Activated CD4-positive, alpha-beta T cell treated with anti-CD3 and anti-CD28 coated beads, Interleukin-2, amount 10 ng/mL, durations not matched to agents 24 days and 14 days (primary cell): ENCODE measurements at regions of chr13 and their contacts with region 1.

Region 1: DNA sequence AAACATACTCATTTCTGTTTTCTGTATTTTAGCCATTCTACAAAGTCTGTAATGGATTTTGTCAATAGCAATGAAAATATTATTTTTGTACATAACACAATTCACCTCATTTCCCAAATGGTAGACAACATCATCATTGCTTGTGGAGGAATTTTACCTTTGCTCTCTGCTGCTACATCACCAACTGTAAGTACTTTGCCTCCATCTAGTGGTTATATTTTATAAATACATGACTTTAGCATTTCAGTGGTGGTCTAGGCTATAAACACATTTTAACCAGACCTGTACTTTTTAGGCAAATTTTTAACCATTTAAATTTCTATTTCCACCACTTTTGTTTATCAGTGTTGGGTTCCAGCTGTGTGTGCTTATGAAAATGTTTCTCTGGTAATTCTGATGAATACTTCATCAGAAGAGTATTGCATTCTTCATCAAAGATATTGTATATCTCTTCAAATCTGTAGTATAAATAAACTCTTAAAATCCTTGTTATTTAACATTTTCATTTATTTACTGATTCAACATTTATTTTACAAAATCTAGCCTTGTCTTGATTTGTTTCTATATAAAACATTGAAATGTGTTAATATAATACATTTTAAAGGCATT is 222.4 kb downstream of the NBEA start:
- DNase-seq: no peak
- H3K4me3 Mint-ChIP-seq: no peak overlapping the region
- H3K27ac Mint-ChIP-seq: no peak overlapping the region
- H3K4me1 Mint-ChIP-seq: peaks cover 8% of the 10 kb centered on the region
- H3K27me3 Mint-ChIP-seq: no peaks in the 10 kb centered on the region

Region 2: DNA sequence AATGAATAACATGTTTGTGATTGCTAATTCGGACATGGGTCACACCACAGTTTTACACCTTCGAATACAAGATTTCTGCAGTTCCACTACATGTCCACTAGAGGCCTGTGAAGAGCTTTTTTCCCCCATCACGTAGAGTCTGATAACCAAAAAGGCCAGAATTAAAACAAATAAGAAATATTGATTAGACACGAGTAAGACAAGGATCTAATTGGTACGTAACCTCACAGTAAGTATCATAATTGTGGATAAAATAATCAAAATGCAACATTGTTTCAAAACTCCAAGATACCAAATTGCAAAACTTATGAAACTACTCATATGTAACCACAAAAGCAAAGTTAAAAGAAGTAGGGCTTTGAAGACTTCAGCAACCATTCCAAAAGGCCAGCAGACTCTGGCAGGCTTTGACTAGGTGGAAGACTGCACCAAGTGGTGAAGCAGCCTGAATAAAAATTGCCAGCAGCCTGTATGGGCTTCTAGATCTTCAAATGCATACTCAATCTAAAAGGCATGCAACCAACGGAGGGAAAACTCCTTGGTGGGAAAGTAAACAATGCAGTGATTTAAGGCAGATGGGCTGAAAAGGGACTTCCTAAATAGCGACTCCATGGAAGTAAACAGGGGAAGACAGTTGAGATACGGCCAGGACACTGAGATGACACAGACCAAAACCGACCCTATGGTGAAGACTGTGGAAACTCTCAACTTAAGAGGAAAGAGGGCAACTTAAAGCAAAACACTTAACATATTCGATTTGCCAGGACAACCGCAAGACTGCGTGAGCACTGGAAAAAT is 1935.6 kb before region 1 on chr13:
- intact Hi-C with region 1: loop called (anchors 5 kb)
- DNase-seq: peak; percentile 67
- H3K4me3 Mint-ChIP-seq: no peak overlapping the region
- H3K27ac Mint-ChIP-seq: peak overlapping the region; percentile 10
- H3K4me1 Mint-ChIP-seq: peaks cover 8% of the 10 kb centered on the region
- H3K27me3 Mint-ChIP-seq: peaks cover 3% of the 10 kb centered on the region

Region 3: GRCh38 chr13:33723772-33724435 is 1440.5 kb before region 1 on chr13:
- intact Hi-C with region 1: loop called (anchors 5 kb)
- DNase-seq: peak; percentile 90
- H3K4me3 Mint-ChIP-seq: no peak overlapping the region
- H3K27ac Mint-ChIP-seq: peak overlapping the region; percentile 76
- H3K4me1 Mint-ChIP-seq: peaks cover 26% of the 10 kb centered on the region
- H3K27me3 Mint-ChIP-seq: no peaks in the 10 kb centered on the region

Region 4: DNA sequence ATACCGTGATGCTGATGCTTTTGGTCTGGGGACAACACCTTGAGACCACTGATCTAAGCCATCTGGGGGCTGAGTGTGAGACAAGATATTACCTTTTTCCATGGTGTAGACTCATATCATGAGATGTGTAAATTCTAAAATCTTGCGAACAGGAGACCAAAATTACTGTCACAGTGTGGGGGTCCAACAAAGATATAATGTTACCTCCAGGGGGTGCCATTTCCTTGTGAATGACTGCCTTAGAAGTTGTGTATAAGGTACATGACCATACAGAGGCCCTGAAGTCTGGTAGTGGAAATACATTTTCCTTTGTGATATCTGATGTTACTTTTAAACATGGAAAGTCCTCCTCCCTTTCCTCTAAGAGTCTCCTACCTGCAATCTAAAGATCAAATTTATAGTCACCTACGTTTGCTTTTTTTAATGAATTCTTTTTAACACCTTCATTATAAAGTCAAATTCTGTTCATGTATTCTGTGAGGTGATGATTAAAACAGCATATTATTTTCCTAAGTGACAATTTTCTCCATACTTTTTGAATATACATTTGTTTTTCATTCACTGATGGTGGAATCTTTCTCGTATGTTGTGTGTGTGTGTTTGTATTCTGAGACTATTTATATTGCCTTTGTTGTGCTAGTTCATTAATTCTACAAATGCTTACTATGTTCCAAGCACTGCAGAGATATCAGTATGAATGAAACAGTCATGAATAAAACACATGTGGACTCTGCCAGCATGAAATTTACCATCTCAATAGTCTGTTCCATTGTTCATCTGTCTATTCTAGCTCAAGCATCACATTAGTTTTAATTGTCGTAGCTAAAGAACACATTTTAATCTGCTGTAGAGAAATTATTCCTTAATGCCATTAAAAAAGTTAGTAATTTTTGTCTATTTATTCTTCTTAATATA is 1232.8 kb before region 1 on chr13:
- intact Hi-C with region 1: loop called (anchors 5 kb)
- DNase-seq: no peak
- H3K4me3 Mint-ChIP-seq: no peak overlapping the region
- H3K27ac Mint-ChIP-seq: no peak overlapping the region
- H3K4me1 Mint-ChIP-seq: no peaks in the 10 kb centered on the region
- H3K27me3 Mint-ChIP-seq: no peaks in the 10 kb centered on the region

Region 5: DNA sequence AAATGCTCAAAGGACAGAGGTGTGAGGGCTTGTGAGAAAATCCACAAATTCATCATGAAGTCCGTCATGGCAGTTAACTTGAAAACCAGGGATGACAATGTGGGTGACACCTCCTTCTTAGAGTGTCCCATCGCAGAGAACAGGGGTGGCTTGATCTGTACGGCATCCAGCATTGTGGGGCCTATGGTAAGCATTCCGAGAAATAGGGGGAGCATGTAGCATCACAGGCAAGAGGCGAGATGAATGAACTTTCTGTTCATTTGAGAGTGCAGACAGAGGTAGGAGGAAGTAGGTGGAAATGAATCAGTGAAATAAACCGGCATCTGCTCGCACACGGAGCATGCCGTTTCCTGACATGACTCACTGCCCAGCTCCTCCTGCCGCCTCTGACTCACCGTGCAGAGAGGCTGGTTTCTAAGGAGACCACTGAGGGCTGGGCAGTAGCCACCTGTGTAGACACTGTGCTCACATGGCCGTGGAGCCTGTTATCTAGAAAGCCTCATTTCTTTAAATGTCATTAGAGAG is 1007.5 kb before region 1 on chr13:
- intact Hi-C with region 1: loop called (anchors 10 kb)
- DNase-seq: peak; percentile 84
- H3K4me3 Mint-ChIP-seq: peak overlapping the region; percentile 71
- H3K27ac Mint-ChIP-seq: peak overlapping the region; percentile 85
- H3K4me1 Mint-ChIP-seq: peaks cover 19% of the 10 kb centered on the region
- H3K27me3 Mint-ChIP-seq: peaks cover 17% of the 10 kb centered on the region

Region 6: GRCh38 chr13:35144166-35144890 is 20.1 kb before region 1 on chr13:
- intact Hi-C with region 1: no loop called
- DNase-seq: no peak
- H3K4me3 Mint-ChIP-seq: no peak overlapping the region
- H3K27ac Mint-ChIP-seq: no peak overlapping the region
- H3K4me1 Mint-ChIP-seq: peaks cover 12% of the 10 kb centered on the region
- H3K27me3 Mint-ChIP-seq: no peaks in the 10 kb centered on the region

Region 7: DNA sequence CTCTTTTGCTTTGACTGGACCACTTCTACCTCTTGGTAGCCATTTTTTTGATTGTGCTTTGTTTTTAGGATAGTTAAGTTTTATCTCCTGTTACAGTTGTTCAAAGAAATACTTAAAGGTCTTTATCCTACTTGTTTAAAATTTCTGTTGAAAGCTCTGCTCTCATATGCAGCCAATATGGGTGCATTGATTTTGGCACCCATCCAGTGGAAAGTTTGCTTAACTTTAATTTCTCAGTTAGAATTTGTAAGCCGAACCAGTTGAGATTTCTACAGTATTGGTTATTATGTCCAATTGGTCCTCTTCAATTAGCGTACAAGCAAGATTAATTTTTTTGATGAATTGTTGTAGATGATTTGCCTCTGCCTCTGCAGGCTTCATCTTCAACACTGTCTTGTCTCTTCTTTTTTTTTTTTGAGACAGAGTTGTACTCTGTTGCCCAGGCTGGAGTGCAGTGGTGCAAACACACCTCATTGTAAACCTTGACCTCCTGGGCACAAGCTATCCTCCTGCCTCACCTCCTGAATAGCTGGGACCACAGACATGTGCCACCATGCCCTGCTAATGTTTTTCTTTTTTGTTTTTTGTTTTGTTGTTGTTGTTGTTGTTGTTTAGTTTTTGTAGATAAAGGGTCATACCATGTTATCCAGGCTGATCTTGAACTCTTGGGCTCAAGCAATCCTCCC is 246.8 kb after region 1 on chr13:
- intact Hi-C with region 1: no loop called
- DNase-seq: no peak
- H3K4me3 Mint-ChIP-seq: no peak overlapping the region
- H3K27ac Mint-ChIP-seq: no peak overlapping the region
- H3K4me1 Mint-ChIP-seq: no peaks in the 10 kb centered on the region
- H3K27me3 Mint-ChIP-seq: no peaks in the 10 kb centered on the region